Posterior cingulate gyrus (tissue), 11 donors: ENCODE measurements at regions of chr12 and their contacts with region 1.

Region 1: DNA sequence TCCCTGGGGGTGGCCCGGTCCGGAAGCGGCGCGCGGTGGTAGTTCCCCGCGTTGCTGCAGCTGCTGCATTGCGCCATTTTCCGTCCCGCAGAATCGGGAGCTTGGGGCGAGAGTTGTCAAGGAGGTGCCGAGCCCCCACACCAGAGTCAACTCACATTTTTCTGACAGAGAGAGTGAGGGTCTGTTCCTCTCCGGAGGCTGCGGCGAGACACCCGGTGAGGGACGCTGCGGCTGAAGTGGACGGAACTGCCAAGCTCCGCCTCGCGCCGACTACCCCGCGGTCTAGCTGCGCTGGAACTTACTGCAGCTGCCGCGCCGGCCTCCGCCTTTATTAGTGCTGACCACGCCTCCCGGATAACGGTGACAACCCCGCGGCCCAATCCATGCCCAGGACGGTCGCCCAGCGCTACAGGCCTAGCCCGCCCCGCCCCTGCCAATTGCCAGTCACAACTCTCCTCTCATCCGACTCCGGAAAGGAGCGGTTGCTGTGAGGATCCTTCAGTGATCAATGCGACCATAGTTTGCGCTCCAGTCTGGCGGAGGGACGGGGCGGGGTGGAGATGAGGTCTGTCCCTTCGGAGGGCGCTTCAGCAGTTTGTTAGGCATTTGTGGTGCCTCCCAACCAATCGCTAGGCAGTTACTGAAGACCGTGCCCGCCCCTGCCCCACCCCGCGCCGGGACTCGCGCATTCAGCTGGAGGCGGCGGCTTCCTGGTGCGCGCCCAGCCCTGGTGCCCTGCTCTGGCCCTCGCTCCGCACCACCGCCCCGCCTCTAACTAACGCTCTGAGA is at the start of gene VAMP1:
- DNase-seq: peak; percentile 99 to 100 (median 100)

Region 2: DNA sequence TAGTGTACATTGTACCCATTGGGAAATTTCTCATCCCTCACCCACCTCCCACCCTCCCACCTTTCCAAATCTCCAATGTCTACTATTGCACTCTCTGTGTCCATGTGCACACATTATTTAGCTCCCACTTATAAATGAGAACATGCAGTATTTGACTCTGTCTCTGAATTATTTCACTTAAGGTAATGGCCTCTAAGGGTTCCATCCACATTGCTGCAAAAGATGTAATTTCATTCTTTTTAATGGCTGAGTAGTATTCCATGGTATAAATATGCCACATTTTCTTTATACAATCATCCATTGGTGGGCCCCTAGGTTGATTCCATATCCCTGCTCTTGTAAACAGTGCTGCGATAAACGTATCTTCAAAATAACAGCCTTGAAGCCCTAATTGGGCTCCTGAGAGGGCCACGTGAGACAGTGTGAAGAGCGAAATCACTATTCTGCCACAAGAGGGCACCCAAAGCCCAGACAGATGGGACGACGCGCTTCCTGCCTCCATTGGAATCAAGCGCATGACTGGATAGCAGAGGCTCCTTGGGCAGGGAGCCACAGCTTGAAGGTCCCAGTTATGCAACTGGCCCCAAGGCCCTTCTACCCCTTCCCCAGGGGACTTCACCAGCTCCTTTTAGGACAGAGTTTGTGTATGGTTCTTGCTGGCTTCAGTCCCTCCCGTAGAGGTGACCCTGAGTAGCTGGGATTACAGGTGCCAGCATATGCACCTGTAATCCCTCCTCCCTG is 47.1 kb before region 1 on chr12:
- intact Hi-C with region 1: loop called (anchors 1 kb)
- DNase-seq: peak; percentile 30 to 95 (median 70)

Region 3: GRCh38 chr12:6493497-6494257 is 23.1 kb after region 1 on chr12 and contains the start of gene NCAPD2:
- intact Hi-C with region 1: loop called (anchors 1 kb)
- DNase-seq: peak; percentile 94 to 99 (median 98)

Region 4: DNA sequence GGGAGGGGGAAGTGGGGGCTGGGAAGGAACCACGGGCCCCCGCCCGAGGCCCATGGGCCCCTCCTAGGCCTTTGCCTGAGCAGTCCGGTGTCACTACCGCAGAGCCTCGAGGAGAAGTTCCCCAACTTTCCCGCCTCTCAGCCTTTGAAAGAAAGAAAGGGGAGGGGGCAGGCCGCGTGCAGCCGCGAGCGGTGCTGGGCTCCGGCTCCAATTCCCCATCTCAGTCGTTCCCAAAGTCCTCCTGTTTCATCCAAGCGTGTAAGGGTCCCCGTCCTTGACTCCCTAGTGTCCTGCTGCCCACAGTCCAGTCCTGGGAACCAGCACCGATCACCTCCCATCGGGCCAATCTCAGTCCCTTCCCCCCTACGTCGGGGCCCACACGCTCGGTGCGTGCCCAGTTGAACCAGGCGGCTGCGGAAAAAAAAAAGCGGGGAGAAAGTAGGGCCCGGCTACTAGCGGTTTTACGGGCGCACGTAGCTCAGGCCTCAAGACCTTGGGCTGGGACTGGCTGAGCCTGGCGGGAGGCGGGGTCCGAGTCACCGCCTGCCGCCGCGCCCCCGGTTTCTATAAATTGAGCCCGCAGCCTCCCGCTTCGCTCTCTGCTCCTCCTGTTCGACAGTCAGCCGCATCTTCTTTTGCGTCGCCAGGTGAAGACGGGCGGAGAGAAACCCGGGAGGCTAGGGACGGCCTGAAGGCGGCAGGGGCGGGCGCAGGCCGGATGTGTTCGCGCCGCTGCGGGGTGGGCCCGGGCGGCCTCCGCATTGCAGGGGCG is 63.5 kb after region 1 on chr12 and contains the start of gene GAPDH:
- intact Hi-C with region 1: loop called (anchors 1 kb)
- DNase-seq: peak; percentile 91 to 100 (median 98)

Region 5: DNA sequence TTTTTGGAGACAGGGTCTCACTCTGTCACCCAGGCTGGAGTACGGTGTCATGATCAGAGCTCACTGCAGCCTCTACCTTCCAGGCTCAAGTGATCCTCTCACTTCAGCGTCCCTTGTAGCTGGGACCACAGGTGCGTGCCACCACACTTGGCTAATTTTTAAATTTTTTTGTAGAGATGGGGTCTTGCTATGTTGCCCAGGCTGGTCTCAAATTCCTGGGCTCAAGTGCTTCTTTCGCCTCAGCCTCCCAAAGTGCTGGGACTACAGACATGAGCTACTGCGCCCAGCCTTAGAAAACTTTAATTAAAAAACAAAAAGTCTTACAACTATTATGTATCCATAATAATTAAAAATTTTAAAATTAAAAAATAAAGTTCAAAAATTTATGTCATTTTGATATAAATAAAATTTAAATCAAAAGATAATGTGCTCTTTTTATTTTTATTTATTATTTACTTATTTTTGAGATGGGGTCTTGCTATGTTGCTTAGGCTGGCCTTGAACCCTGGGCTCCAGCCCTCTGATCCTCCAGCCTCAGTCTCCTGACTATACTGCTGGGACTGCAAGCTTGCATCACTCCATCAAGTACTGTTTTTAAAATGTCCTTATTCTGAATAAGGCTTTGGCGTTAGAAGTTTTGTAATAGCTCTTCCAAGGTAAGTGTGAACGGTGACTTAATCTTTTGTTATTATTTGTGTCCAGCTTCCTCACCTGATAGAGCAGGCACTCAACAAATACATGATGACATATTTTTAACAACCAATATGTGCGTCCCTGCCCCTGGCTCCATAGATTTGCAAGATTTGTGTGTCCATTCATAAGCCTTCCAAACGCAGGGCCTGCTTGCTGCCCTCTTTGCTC is 636.8 kb after region 1 on chr12:
- intact Hi-C with region 1: no loop called
- DNase-seq: peak in 3 of 10 donors; percentile 26 to 53 (median 36)